A549 (cell line): ENCODE measurements at regions of chr17 and their contacts with region 1.

Region 1: DNA sequence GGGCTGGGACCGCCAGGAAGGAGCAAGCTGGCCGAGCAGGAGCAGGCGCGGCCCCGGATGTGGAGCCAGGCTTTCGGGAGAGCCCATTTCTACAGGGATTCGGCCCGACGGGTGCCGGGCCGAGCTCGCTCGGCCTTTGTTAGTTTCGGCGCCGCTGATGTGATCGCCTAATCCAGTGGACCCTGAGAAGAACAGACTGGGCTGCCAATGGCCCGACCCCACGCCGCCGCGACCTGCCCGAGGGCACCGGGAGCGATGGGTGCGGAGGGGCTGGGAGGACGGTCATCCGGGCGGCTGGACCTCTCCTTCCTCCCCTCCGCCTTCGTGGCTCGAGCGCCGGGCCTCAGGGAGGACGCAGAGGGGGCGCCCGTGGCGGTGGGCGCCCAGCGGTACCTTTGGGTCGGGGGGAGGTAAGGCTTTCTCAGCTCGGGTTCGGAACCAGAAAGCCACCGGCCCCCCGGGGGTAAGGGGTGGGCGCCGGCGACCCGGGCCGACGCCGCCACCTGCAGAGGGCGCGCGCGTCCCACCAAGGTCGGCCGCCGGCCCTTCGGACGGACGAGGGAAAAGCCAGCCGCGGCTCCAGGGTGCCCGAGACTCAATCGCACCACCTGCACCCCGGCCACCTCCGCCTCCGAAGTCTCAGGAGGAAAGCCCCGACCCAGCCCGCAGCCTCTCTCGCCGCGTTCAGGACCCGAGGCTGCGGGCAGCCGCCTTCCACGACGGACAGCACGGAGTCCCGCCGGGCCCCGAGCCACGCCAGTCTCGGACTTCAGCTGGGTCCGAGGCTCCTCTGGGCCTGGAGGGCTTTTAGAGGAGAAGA is 7.1 kb downstream of the CBX8 start:
- DNase-seq: peak; percentile 58 to 95
- ATAC-seq: peak; percentile 19 to 65; a peak in 3 of 6 replicates
- H3K4me3 ChIP-seq: no peak overlapping the region
- H3K27ac ChIP-seq: peak overlapping the region; percentile 63 to 73; a peak in 5 of 6 replicates
- H3K4me1 ChIP-seq: peaks cover 22% of the 10 kb centered on the region
- CTCF ChIP-seq: peak; percentile 98
- EP300 ChIP-seq: no peak
- POLR2A ChIP-seq: no peak
- RAD21 ChIP-seq: peak; percentile 85 to 96

Region 2: DNA sequence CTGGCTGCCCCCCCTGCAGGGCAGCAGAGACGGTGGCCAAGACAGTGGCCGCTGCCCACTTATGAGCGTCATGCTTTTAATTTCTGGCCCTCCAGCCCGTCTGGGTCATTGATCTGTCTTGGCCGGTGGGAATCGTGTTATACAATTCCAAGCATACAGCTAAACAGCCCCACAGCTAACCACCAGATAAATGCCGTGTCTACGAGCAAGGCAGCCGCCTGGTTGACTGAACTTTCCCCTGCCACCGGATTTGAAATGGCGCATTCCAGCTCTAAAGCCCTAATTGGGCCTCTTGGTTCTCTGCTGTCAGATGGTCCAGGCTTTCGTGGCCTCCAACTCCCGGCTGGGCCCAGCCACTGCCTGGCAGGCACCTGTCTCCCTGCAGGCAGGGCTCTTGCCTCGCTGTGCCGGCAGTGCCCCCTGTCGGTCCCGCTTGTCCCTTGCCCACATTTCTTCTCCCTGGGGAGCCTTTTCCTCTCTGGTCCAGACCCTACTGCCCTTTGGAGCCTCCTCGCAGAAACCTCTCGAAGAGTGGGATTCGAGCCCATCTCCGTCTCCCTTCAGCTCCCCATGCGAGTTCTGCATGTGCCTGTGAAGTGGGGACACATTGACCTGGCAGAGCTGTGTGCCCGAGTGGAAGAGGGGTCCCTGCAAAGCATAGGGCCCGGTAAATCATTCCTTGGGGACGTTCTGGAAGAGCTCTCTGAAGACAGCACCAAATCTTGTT is 177.1 kb before region 1 on chr17:
- CTCF ChIA-PET with region 1: no interaction called
- POLR2A ChIA-PET with region 1: no interaction called
- DNase-seq: peak; percentile 92 to 94
- ATAC-seq: peak; percentile 67 to 89
- H3K4me3 ChIP-seq: no peak overlapping the region
- H3K27ac ChIP-seq: peak overlapping the region; percentile 88 to 95
- H3K4me1 ChIP-seq: peaks cover 37% of the 10 kb centered on the region
- CTCF ChIP-seq: peak; percentile 97
- EP300 ChIP-seq: no peak
- POLR2A ChIP-seq: no peak
- RAD21 ChIP-seq: peak; percentile 96 to 97

Region 3: DNA sequence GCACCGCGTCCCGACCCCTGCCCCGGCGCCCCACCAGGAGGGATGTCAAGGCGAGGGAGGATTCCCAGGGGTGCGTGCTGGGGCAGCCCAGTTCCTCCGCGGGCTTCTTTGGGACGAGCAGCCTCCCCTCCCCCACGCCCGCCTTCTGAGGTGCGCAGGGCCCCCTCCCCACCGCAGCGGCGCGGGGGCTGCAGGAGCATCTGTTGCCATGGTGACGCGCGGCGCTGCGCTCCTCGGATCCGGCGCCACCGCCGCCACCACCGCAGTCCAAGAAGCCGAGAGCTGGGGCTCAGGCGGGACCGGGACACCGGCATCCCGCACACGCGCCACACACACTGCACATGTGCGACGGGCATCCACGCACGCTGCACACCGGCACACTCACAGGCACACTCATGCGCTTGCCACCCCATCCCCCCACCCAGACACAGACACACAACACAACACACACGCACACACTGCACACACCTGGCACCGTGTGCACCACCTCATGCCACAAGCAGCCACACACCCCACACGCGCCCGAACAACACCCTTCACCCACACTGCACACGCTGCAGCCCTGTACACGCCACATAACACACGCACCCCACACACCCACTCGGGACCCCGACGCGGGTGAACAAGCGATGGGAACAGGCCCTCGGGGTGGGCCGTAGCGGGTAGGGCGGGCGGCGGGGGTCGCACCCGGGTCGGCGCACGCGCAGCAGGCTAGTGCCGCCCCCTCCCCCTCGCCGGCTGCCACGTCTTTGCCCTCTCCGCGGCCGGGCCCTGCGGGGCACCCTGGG is 42.0 kb before region 1 on chr17:
- CTCF ChIA-PET with region 1: interaction called, 25 read pairs
- POLR2A ChIA-PET with region 1: no interaction called
- DNase-seq: no peak
- ATAC-seq: no peak
- H3K4me3 ChIP-seq: peak overlapping the region; percentile 21; the same call in 1 of the 3 replicates
- H3K27ac ChIP-seq: peak overlapping the region; percentile 5 to 65; a peak in 3 of 6 replicates
- H3K4me1 ChIP-seq: peaks cover 34% of the 10 kb centered on the region
- CTCF ChIP-seq: no peak
- EP300 ChIP-seq: no peak
- POLR2A ChIP-seq: no peak
- RAD21 ChIP-seq: no peak

Region 4: GRCh38 chr17:79810130-79811010 is 20.6 kb after region 1 on chr17:
- CTCF ChIA-PET with region 1: interaction called, 1,281 read pairs
- POLR2A ChIA-PET with region 1: interaction called, 7 read pairs
- DNase-seq: peak; percentile 90 to 92
- ATAC-seq: peak; percentile 55 to 80
- H3K4me3 ChIP-seq: peak overlapping the region; percentile 51
- H3K27ac ChIP-seq: peak overlapping the region; percentile 95 to 99
- H3K4me1 ChIP-seq: peaks cover 40% of the 10 kb centered on the region
- CTCF ChIP-seq: no peak
- EP300 ChIP-seq: no peak
- POLR2A ChIP-seq: peak; percentile 33; the same call in 1 of the 2 replicates
- RAD21 ChIP-seq: no peak

Region 5: DNA sequence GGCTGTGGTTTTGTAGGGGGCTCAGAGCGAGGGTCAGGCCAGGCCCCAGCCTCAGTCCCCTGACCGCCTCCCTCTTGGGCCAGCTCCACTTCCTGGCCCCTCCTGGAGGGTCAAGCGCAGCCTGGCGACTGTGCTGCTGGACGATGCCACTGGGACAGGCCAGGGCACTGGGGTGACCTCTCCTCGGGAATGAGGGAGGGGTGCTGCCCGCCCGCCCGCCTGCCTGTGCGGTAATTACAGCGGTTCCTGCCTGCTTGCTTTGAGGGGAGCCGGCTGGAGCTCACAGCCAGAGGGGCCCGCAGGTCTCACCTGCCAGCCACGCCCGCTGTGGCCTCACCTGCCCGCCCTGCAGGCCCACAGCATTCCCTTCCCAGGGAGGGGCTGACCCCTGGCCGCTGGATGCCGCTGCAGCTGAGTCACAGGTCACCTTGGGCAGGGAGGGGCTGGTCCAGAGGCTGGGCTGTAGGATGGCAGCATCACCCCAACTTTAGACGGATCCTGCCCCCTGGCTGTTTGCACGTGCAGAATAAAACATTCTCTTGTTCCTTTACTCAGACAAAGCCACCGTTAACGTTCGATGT is 126.2 kb after region 1 on chr17:
- CTCF ChIA-PET with region 1: interaction called, 25 read pairs
- POLR2A ChIA-PET with region 1: no interaction called
- DNase-seq: peak; percentile 77 to 82
- ATAC-seq: peak; percentile 48 to 52; a peak in 5 of 6 replicates
- H3K4me3 ChIP-seq: no peak overlapping the region
- H3K27ac ChIP-seq: peak overlapping the region; percentile 45 to 75; a peak in 5 of 6 replicates
- H3K4me1 ChIP-seq: peaks cover 35% of the 10 kb centered on the region
- CTCF ChIP-seq: peak; percentile 56
- EP300 ChIP-seq: no peak
- POLR2A ChIP-seq: no peak
- RAD21 ChIP-seq: peak; percentile 81 to 86

Region 6: DNA sequence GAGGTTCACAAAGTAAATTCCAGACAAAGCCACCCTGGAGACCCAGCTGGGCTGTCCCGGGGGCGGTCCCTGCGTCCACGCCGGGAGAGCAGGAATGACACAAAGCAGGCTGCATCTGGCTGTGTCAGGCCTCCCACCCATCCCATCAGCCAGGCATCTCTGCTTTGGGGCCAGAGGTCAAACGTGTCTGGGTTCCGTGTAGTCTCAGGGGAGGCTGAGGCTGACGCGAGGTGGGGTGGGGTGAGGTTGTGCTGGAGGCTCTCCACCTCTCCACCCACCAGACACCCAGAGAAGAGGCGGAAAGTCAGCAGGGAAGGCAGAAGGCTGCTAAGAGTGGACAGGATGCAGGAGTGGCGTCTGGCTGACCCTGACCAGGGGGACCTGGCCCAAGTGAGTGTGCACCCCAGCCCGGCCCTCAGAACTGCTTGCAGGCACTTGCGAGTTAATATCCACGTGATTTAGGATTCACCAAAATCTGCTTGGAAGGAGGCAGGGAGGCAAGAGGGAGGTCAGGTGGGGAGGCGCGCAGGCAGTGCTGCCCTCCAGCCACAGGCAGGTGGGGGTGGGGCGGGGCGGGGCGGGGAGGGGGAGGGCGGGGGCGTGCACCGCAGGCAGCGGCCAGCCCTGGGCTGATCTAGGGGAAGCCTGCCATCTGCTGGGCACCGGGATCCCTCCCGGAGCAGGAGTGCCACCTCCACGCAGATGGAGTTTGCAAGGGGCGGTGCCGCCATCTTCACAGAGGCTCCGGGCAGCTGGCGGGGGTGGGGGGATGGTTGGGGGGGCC is 201.6 kb after region 1 on chr17:
- CTCF ChIA-PET with region 1: interaction called, 96 read pairs
- POLR2A ChIA-PET with region 1: interaction called, 3 read pairs
- DNase-seq: peak; percentile 88 to 97
- ATAC-seq: peak; percentile 69 to 90
- H3K4me3 ChIP-seq: peak overlapping the region; percentile 51
- H3K27ac ChIP-seq: peak overlapping the region; percentile 89 to 95
- H3K4me1 ChIP-seq: peaks cover 83% of the 10 kb centered on the region
- CTCF ChIP-seq: peak; percentile 88
- EP300 ChIP-seq: no peak; a peak in 1 of 5 replicates
- POLR2A ChIP-seq: no peak
- RAD21 ChIP-seq: peak; percentile 86 to 99